ENCODE measurements at regions of chr9 and their contacts with region 1.

Region 1: DNA sequence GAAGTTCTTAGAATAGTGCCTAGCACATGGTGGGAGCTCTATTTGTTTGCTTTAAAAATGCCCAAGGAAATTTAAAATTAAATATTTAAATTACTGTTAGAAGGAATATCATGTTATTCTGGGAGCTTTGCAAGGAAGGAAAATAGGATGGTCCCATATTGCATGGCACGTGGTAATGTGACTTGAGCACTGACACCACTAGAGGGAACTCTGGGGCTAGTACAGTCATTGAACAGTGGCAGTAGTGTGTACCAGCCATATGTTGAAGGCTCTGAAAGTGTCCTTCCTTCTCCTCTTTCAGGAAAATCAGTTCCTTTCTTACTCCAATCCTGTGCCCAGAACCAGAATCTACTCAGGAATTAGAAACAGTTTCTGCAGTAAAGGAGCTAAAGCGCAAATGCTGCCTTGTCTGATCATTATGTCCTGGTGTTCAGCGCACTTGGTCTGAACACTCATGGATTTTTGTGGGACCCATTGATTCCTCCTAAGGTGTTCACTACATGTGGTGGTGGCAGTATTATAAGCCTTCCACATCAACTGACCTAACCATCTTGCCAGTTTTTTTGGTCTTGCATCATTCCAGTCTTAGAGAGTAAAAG is 54.1 kb downstream of the GDA start:
- DNase-seq: no peak
- ATAC-seq: peak; percentile 76
- H3K4me3 ChIP-seq: no peak overlapping the region
- H3K27ac ChIP-seq: no peak overlapping the region
- H3K4me1 ChIP-seq: peaks cover 4% of the 10 kb centered on the region
- H3K27me3 ChIP-seq: no peaks in the 10 kb centered on the region
- CTCF ChIP-seq: peak; percentile 62 to 71 (median 71)
- EP300 ChIP-seq: no peak
- POLR2A ChIP-seq: no peak
- RAD21 ChIP-seq: peak; percentile 51

Region 2: DNA sequence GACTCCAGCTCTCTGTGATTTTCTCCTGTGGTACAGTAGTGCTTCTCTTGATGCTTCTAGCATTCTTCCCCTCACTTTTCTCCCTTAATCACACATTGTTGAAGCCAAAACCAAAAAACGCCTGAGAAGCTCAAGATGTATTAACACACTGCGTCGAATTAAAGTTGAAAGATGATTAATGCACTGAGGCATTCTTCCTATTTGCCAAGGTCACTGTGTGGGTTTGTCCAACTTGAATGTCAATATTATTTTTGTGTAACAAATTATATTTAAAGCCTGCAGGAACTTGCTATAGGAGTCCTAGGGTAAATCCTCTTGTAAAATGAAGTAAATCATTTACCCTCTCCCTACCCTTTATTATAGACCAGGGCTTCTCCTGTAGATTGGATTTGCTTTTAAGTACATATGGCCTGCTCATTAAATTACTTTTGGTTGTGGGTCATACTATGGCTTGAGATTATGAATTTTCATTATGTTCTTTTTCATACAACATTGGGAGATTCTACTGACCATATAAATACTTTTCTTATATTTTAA is 14.1 kb after region 1 on chr9:
- CTCF ChIA-PET with region 1: interaction called, 4 read pairs
- POLR2A ChIA-PET with region 1: interaction called, 5 read pairs
- RAD21 ChIA-PET with region 1: interaction called, 4 read pairs
- SMC1A ChIA-PET with region 1: interaction called, 33 read pairs
- in situ Hi-C with region 1: no loop called
- intact Hi-C with region 1: no loop called
- DNase-seq: no peak
- ATAC-seq: no peak
- H3K4me3 ChIP-seq: no peak overlapping the region
- H3K27ac ChIP-seq: no peak overlapping the region
- H3K4me1 ChIP-seq: no peaks in the 10 kb centered on the region
- H3K27me3 ChIP-seq: no peaks in the 10 kb centered on the region
- CTCF ChIP-seq: no peak
- EP300 ChIP-seq: no peak
- POLR2A ChIP-seq: no peak
- RAD21 ChIP-seq: no peak

Region 3: GRCh38 chr9:72271613-72272478 is 68.5 kb after region 1 on chr9:
- CTCF ChIA-PET with region 1: interaction called, 468 read pairs
- POLR2A ChIA-PET with region 1: interaction called, 11 read pairs
- RAD21 ChIA-PET with region 1: interaction called, 242 read pairs
- SMC1A ChIA-PET with region 1: interaction called, 446 read pairs
- in situ Hi-C with region 1: no loop called
- intact Hi-C with region 1: loop called (anchors 1 kb)
- DNase-seq: no peak
- ATAC-seq: peak; percentile 78
- H3K4me3 ChIP-seq: no peak overlapping the region
- H3K27ac ChIP-seq: no peak overlapping the region
- H3K4me1 ChIP-seq: peaks cover 3% of the 10 kb centered on the region; the same call in 1 of the 2 replicates
- H3K27me3 ChIP-seq: peaks cover 0 to 2% of the 10 kb centered on the region in 2 experiments; a peak in 1 of 4 replicates
- CTCF ChIP-seq: peak; percentile 80 to 82 (median 81)
- EP300 ChIP-seq: no peak
- POLR2A ChIP-seq: no peak
- RAD21 ChIP-seq: peak; percentile 83

Region 4: GRCh38 chr9:72300873-72301272 is 97.6 kb after region 1 on chr9:
- CTCF ChIA-PET with region 1: no interaction called
- POLR2A ChIA-PET with region 1: no interaction called
- RAD21 ChIA-PET with region 1: no interaction called
- SMC1A ChIA-PET with region 1: no interaction called
- in situ Hi-C with region 1: no loop called
- intact Hi-C with region 1: no loop called
- DNase-seq: no peak
- ATAC-seq: peak; percentile 76
- H3K4me3 ChIP-seq: no peak overlapping the region
- H3K27ac ChIP-seq: no peak overlapping the region
- H3K4me1 ChIP-seq: peaks cover 11% of the 10 kb centered on the region
- H3K27me3 ChIP-seq: no peaks in the 10 kb centered on the region
- CTCF ChIP-seq: no peak
- EP300 ChIP-seq: no peak
- POLR2A ChIP-seq: no peak
- RAD21 ChIP-seq: no peak

Region 5: GRCh38 chr9:72526901-72527800 is 323.8 kb after region 1 on chr9:
- CTCF ChIA-PET with region 1: no interaction called
- POLR2A ChIA-PET with region 1: no interaction called
- RAD21 ChIA-PET with region 1: no interaction called
- SMC1A ChIA-PET with region 1: interaction called, 3 read pairs
- in situ Hi-C with region 1: no loop called
- intact Hi-C with region 1: loop called (anchors 10 kb)
- DNase-seq: peak; percentile 77
- ATAC-seq: peak; percentile 90
- H3K4me3 ChIP-seq: peak overlapping the region; percentile 51
- H3K27ac ChIP-seq: peak overlapping the region; percentile 66
- H3K4me1 ChIP-seq: peaks cover 16% of the 10 kb centered on the region
- H3K27me3 ChIP-seq: no peaks in the 10 kb centered on the region
- CTCF ChIP-seq: peak in 1 of 3 experiments; percentile 22; a peak in 1 of 6 replicates
- EP300 ChIP-seq: peak; percentile 3 to 63; a peak in 1 of 4 replicates
- POLR2A ChIP-seq: peak; percentile 76
- RAD21 ChIP-seq: no peak

Region 6: GRCh38 chr9:72817413-72817812 is 614.1 kb after region 1 on chr9:
- CTCF ChIA-PET with region 1: no interaction called
- POLR2A ChIA-PET with region 1: no interaction called
- RAD21 ChIA-PET with region 1: interaction called, 3 read pairs
- SMC1A ChIA-PET with region 1: no interaction called
- in situ Hi-C with region 1: no loop called
- intact Hi-C with region 1: loop called (anchors 5 kb)
- DNase-seq: no peak
- ATAC-seq: peak; percentile 82
- H3K4me3 ChIP-seq: no peak overlapping the region
- H3K27ac ChIP-seq: no peak overlapping the region
- H3K4me1 ChIP-seq: no peaks in the 10 kb centered on the region
- H3K27me3 ChIP-seq: no peaks in the 10 kb centered on the region
- CTCF ChIP-seq: no peak
- EP300 ChIP-seq: no peak
- POLR2A ChIP-seq: no peak
- RAD21 ChIP-seq: no peak

Measured in GM12878 (cell line).